HEK293 (cell line): ENCODE measurements at regions of chr14 and their contacts with region 1.

Region 1: DNA sequence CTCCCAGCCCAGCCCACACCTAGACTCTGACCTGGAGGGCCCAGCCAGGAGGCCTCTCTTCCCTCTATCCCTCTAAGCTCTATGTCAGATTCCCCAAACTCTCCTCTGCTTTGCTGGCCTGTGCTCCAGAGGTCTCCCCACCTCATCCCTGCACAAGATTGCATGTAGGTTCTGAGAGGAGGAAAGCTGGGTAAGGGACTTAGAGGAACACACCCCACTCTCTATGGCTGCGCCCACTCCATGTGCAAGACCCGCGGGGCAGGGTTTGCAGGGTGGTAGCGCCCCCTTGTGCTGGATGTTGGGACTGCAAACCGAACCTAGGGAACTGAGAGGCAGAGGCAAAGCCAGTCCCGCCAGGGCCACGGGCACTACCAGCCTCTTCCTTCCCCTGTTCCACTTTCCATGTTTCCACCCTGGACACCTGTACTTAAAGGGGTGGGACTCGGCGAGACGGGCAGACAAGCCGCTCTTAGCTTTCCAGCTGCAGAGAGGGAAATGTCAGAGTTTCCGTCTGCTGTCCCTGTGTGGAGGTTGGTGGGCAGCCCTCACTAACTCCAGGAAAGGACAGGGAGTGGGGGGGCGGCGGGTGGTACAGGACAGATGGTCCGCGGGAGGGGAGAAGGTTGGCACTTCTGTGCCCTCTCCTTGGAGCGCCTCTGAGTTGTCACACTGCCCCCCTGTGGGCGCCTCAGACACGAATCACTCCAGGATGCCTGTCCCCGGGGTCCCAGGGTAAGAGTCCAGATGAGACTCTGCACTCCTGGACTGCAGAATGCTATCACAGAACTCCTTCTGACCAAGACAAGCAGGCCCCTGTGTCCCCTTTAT is 16.8 kb downstream of the MMP14 start:
- H3K4me3 ChIP-seq: peak overlapping the region; percentile 50
- H3K27ac ChIP-seq: no peak overlapping the region
- H3K4me1 ChIP-seq: no peaks in the 10 kb centered on the region
- CTCF ChIP-seq: peak; percentile 91

Region 2: GRCh38 chr14:22646570-22647254 is 206.4 kb before region 1 on chr14:
- CTCF ChIA-PET with region 1: interaction called, 10 read pairs
- POLR2A ChIA-PET with region 1: no interaction called
- H3K4me3 ChIP-seq: no peak overlapping the region
- H3K27ac ChIP-seq: no peak overlapping the region
- H3K4me1 ChIP-seq: no peaks in the 10 kb centered on the region; the same call in 1 of the 2 replicates
- CTCF ChIP-seq: no peak

Region 3: GRCh38 chr14:22773162-22774010 is 79.8 kb before region 1 on chr14:
- CTCF ChIA-PET with region 1: interaction called, 34 read pairs
- POLR2A ChIA-PET with region 1: no interaction called
- H3K4me3 ChIP-seq: no peak overlapping the region
- H3K27ac ChIP-seq: no peak overlapping the region
- H3K4me1 ChIP-seq: no peaks in the 10 kb centered on the region; the same call in 1 of the 2 replicates
- CTCF ChIP-seq: no peak

Region 4: GRCh38 chr14:22829661-22830442 is 23.3 kb before region 1 on chr14 and contains the start of gene MRPL52:
- CTCF ChIA-PET with region 1: interaction called, 115 read pairs
- POLR2A ChIA-PET with region 1: interaction called, 3 read pairs
- H3K4me3 ChIP-seq: peak within 1 kb of the TSS; percentile 97
- H3K27ac ChIP-seq: peak within 1 kb of the TSS; percentile 37; the same call in 1 of the 2 replicates
- H3K4me1 ChIP-seq: peaks cover 4% of the 10 kb centered on the region
- CTCF ChIP-seq: no peak

Region 5: DNA sequence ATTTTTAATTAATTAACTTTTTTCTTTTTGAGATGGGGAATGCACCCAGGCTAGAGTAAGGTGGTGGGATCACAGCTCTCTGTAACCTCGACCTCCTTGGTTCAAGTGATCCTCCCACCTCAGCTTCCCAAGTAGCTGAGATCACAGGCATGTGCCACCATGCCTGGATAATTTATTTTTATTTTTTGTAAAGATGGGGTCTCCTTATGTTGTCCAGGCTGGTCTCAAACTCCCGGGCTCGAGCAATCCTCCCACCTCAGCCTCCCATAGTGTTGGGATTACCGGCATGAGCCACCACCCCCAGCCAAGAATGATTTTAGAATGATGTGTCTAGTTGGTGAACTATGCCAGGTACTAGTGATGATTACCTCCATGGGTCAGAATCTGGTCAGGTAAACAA is 11.8 kb after region 1 on chr14:
- CTCF ChIA-PET with region 1: interaction called, 29 read pairs
- POLR2A ChIA-PET with region 1: no interaction called
- H3K4me3 ChIP-seq: no peak overlapping the region
- H3K27ac ChIP-seq: no peak overlapping the region
- H3K4me1 ChIP-seq: no peaks in the 10 kb centered on the region; the same call in 1 of the 2 replicates
- CTCF ChIP-seq: no peak

Region 6: GRCh38 chr14:23006544-23007419 is 153.6 kb after region 1 on chr14:
- CTCF ChIA-PET with region 1: no interaction called
- POLR2A ChIA-PET with region 1: no interaction called
- H3K4me3 ChIP-seq: peak overlapping the region; percentile 52
- H3K27ac ChIP-seq: peak overlapping the region; percentile 91
- H3K4me1 ChIP-seq: peaks cover 8% of the 10 kb centered on the region; the same call in 1 of the 2 replicates
- CTCF ChIP-seq: peak; percentile 85